ENCODE measurements at regions of chr1 and their contacts with region 1.

Region 1: GRCh38 chr1:46527474-46528296 is 23.8 kb downstream of the KNCN start:
- DNase-seq: no peak
- H3K4me3 ChIP-seq: no peak overlapping the region
- H3K27ac ChIP-seq: no peak overlapping the region
- H3K4me1 ChIP-seq: peaks cover 10% of the 10 kb centered on the region
- H3K27me3 ChIP-seq: no peaks in the 10 kb centered on the region
- CTCF ChIP-seq: peak; percentile 82 to 84 (median 83)
- POLR2A ChIP-seq: no peak

Region 2: DNA sequence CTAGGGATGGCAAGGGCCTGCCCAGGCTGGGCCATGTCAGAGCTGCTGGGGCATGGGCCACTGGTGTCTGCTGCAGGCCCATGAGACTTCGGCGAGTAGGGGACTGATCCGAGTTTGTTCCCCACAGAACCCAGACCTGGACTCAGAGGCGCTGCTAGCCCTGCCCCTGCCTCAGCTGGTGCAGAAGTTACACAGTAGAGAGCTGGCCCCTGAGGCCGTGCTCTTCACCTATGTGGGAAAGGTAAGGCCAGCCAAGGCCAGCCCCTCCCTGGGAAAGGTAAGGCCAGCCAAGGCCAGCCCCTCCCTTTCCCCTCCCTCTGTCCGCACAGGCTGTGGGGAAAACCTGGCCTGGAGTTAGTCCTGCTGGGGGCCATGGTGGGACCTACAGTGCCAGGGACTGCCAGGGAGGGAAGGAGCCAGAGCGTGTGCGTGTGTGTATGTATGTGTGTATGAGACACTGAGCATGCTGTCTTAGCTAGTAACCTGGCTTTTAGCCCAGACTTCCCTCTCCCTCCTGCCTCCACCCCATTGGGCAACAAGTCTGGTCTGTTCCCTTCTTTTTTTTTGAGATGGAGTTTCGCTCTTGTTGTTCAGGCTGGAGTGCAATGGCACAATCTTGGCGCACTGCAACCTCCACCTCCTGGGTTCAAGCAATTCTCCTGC is 125.6 kb before region 1 on chr1:
- intact Hi-C with region 1: loop called (anchors 5 kb)
- DNase-seq: no peak
- H3K4me3 ChIP-seq: no peak overlapping the region
- H3K27ac ChIP-seq: peak overlapping the region; percentile 20
- H3K4me1 ChIP-seq: peaks cover 26% of the 10 kb centered on the region
- H3K27me3 ChIP-seq: no peaks in the 10 kb centered on the region
- CTCF ChIP-seq: no peak
- POLR2A ChIP-seq: no peak

Region 3: DNA sequence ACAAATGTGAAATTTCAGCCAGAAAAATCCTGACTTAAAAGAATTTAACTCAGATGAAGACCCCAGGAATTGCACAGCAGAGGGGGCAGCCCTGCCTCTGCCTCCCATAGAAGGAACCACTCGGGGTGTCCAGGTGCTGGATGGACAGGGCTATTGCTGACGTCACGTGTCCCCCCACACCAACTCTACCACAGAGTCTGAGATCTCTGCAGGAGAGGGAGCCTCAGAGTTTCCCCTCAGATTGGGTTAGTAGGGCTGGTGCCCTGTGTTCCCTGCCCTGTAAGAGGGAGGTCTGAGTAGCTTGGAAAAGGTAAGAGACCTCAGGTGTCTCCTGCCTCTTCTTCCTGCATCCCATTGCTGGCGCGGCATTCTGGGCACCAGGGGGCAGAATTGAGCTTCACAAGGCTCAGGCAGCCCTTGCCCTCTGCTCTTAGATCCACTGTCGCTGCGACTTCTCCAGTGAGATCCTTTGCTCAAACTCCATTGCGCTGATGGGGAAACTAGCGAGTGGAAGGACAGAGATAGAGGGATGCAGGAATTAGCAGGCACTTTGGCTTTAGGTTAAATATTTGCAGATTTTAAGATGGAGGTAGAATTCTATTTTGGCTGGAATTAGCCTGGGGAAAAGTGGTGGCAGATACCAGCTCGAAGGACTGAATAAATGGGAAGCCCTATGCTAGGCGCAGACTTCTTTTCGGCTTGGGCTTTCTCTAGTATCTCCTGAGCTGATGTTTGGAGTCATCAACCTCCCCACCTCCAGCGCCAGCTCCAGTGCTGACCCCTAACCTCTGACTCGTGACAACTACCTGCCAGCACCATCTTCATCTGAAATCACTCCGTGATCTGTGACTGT is 80.8 kb before region 1 on chr1:
- intact Hi-C with region 1: loop called (anchors 5 kb)
- DNase-seq: no peak
- H3K4me3 ChIP-seq: no peak overlapping the region
- H3K27ac ChIP-seq: no peak overlapping the region
- H3K4me1 ChIP-seq: peaks cover 9% of the 10 kb centered on the region
- H3K27me3 ChIP-seq: no peaks in the 10 kb centered on the region
- CTCF ChIP-seq: peak; percentile 37 to 67 (median 50)
- POLR2A ChIP-seq: no peak

Measured in vagina (tissue), 2 donors.